ENCODE measurements at regions of chr17 and their contacts with region 1.

Region 1: DNA sequence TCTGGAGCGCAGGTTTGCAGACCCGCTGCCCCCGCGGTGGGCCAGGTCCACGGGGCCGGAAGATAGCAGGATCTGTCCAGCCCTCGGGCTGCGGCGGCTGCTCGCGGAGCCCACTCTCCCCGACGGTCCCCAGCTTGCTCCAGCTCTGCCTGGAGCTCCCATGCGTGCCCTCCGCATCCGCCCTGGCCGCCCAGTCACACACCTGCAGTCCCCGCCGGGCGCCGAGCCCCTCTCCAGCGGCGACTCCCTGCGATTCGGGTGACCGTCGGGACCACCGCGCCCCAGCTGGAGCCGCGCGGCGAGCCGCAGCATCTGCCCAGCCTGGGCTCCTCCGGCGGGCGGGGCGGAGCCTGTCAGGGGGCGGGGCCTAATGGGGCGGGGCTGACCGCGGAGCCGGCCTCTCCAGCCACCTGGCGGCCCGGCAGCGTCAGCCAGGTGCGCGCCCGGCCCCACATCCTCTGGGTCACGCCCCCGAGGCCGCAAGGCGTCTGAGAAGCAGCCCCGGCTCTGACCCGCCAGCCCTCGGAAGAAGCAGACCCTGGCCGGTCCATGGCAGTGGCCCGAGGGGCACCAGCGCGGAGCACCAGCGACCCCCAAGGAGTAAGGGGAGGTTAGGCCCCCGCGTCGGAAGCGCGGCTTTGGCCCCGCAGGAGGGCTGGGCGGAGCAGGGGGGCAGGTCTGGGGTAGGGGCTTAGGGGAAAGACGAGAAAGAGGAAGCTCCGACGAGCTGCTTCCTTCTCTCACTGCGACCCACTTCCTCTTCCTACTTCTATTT is at the start of gene PIK3R5:
- DNase-seq: peak; percentile 62
- H3K4me3 Mint-ChIP-seq: peak within 1 kb of the TSS; percentile 98
- H3K27ac Mint-ChIP-seq: peak within 1 kb of the TSS; percentile 96
- H3K4me1 Mint-ChIP-seq: peaks cover 52% of the 10 kb centered on the region
- H3K27me3 Mint-ChIP-seq: no peaks in the 10 kb centered on the region
- total RNA-seq, gene PIK3R5: 30.5 and 33.6 TPM in 2 replicates

Region 2: DNA sequence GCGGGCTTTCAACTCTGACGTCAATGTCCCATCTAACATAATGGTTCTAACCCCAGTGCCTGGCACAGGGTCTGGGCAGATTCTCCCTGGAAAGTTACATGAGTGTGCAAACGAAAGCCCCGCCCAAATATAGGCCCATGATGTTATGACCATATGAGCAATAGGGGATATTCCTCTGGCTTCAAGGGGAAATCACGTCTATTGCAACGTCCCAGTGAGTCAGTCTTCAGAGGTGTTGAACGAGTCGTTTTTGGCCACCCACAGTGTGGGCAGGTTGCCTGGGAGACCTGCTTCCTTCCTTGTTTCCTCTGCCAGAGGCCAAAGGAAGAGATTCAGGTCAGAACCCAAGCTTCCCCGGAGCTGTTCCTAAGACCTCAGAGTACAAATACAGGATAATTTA is 30.4 kb before region 1 on chr17:
- intact Hi-C with region 1: loop called (anchors 1 kb)
- DNase-seq: no peak
- H3K4me3 Mint-ChIP-seq: peak overlapping the region; percentile 68
- H3K27ac Mint-ChIP-seq: peak overlapping the region; percentile 93
- H3K4me1 Mint-ChIP-seq: peaks cover 59% of the 10 kb centered on the region
- H3K27me3 Mint-ChIP-seq: no peaks in the 10 kb centered on the region

Region 3: GRCh38 chr17:8941520-8941919 is 24.1 kb before region 1 on chr17:
- intact Hi-C with region 1: loop called (anchors 1 kb)
- DNase-seq: peak; percentile 68
- H3K4me3 Mint-ChIP-seq: peak overlapping the region; percentile 67
- H3K27ac Mint-ChIP-seq: peak overlapping the region; percentile 97
- H3K4me1 Mint-ChIP-seq: peaks cover 60% of the 10 kb centered on the region
- H3K27me3 Mint-ChIP-seq: no peaks in the 10 kb centered on the region

Region 4: GRCh38 chr17:8949061-8949661 is 16.4 kb before region 1 on chr17:
- intact Hi-C with region 1: loop called (anchors 1 kb)
- DNase-seq: no peak
- H3K4me3 Mint-ChIP-seq: peak overlapping the region; percentile 28
- H3K27ac Mint-ChIP-seq: peak overlapping the region; percentile 61
- H3K4me1 Mint-ChIP-seq: peaks cover 84% of the 10 kb centered on the region
- H3K27me3 Mint-ChIP-seq: no peaks in the 10 kb centered on the region

Region 5: GRCh38 chr17:8955021-8955959 is 10.3 kb before region 1 on chr17:
- intact Hi-C with region 1: loop called (anchors 1 kb)
- DNase-seq: no peak
- H3K4me3 Mint-ChIP-seq: peak overlapping the region; percentile 73
- H3K27ac Mint-ChIP-seq: peak overlapping the region; percentile 89
- H3K4me1 Mint-ChIP-seq: peaks cover 96% of the 10 kb centered on the region
- H3K27me3 Mint-ChIP-seq: no peaks in the 10 kb centered on the region

Region 6: GRCh38 chr17:8997994-8998628 is 32.5 kb after region 1 on chr17:
- intact Hi-C with region 1: loop called (anchors 5 kb)
- DNase-seq: peak; percentile 67
- H3K4me3 Mint-ChIP-seq: no peak overlapping the region
- H3K27ac Mint-ChIP-seq: no peak overlapping the region
- H3K4me1 Mint-ChIP-seq: no peaks in the 10 kb centered on the region
- H3K27me3 Mint-ChIP-seq: peaks cover 35% of the 10 kb centered on the region

Measured in activated T-helper 1 cell treated with anti-CD3 and anti-CD28 coated beads, Interleukin-12 subunit alpha, Interleukin-12 subunit beta, Interleukin-2, Interleukin-4 antibody, amounts not matched to agents 30 ng/mL and 10 ng/mL and 1 ng/mL, durations not matched to agents 14 hours and 24 hours and 36 hours (primary cell).